ENCODE measurements at regions of chr10 and their contacts with region 1.

Region 1: DNA sequence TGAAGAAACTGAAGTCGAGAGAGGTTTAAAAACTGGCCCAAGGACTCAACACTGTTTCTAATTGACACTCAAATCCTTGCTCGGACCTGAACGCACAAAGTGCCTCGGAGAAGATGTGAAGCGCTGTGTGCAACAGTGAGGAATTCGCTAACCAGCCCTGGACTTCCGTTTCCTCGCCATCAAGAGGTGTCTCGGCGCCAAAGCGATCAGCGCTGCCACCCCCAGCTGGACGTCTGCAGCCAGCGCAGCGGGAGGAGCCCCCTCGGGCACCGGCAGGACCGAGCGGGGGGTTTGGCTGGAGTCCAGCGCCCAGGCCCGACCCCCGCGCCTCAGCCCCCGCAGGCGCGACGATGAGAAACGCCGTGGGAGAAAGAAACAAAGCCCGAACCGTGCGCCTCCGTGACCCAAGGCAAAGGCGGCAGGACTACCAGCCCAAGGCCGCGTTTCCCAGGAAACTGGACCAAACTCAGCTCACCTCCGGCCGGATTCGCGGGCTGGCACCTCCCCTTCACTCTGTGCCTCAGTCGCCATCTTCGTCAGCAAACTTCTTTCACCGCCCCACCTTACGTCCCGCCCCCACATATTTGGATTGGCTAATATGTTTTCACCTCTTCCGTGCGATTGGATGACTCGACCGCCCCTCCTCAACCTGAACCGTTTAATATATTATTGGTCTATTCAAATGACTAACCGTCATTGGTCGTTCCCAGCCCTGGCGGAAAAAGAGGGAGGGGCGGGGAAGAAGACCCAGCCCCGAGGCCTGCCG is at the start of gene ARHGAP19:
- DNase-seq: peak; percentile 97
- H3K4me3 ChIP-seq: peak within 1 kb of the TSS; percentile 66
- H3K27me3 ChIP-seq: no peaks in the 10 kb centered on the region
- CTCF ChIP-seq: peak; percentile 24
- polyA plus RNA-seq, gene ARHGAP19: 2.4 and 4.9 TPM in 2 replicates

Region 2: GRCh38 chr10:96690755-96691731 is 601.2 kb before region 1 on chr10:
- CTCF ChIA-PET with region 1: no interaction called
- POLR2A ChIA-PET with region 1: interaction called, 24 read pairs
- DNase-seq: no peak
- H3K4me3 ChIP-seq: no peak overlapping the region
- H3K27me3 ChIP-seq: no peaks in the 10 kb centered on the region
- CTCF ChIP-seq: no peak

Region 3: GRCh38 chr10:97307866-97308780 is 15.8 kb after region 1 on chr10:
- CTCF ChIA-PET with region 1: no interaction called
- POLR2A ChIA-PET with region 1: no interaction called
- DNase-seq: no peak
- H3K4me3 ChIP-seq: no peak overlapping the region
- H3K27me3 ChIP-seq: no peaks in the 10 kb centered on the region
- CTCF ChIP-seq: no peak